ENCODE measurements at regions of chr14 and their contacts with region 1.

Region 1: GRCh38 chr14:73718418-73719251 is 4.5 kb upstream of the PNMA1 start:
- DNase-seq: no peak
- ATAC-seq: no peak
- H3K4me3 ChIP-seq: no peak overlapping the region
- H3K27ac ChIP-seq: peak overlapping the region; percentile 38
- H3K4me1 ChIP-seq: peaks cover 20% of the 10 kb centered on the region
- H3K27me3 ChIP-seq: no peaks in the 10 kb centered on the region
- CTCF ChIP-seq: no peak
- POLR2A ChIP-seq: no peak
- RAD21 ChIP-seq: no peak

Region 2: GRCh38 chr14:73599499-73599898 is 119.1 kb before region 1 on chr14:
- CTCF ChIA-PET with region 1: no interaction called
- POLR2A ChIA-PET with region 1: no interaction called
- dilution Hi-C with region 1: no loop called
- in situ Hi-C with region 1: no loop called
- intact Hi-C with region 1: no loop called
- DNase-seq: no peak
- ATAC-seq: no peak
- H3K4me3 ChIP-seq: no peak overlapping the region
- H3K27ac ChIP-seq: no peak overlapping the region
- H3K4me1 ChIP-seq: no peaks in the 10 kb centered on the region
- H3K27me3 ChIP-seq: peaks cover 5% of the 10 kb centered on the region
- CTCF ChIP-seq: no peak
- POLR2A ChIP-seq: no peak
- RAD21 ChIP-seq: no peak

Region 3: DNA sequence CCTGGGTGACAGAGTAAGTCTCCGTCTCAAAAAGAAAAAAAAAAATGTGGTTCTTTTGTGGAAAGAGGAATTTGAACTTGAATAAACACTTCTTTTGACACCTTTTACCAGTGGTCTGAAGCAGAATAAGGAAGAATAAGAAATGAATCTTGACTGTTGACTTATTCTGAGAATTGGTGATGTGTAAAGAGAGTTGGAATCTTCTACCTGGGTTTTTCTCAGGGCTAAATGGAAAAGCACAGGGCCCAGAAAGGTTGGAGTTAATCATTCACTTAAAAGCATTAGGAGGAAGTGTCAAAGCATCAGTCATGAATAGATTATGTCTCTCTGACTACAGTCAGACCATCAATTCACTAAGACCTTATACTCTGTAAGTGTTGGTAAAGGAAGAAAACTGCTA is 18.3 kb before region 1 on chr14:
- CTCF ChIA-PET with region 1: no interaction called
- POLR2A ChIA-PET with region 1: interaction called, 19 read pairs
- dilution Hi-C with region 1: no loop called
- in situ Hi-C with region 1: no loop called
- intact Hi-C with region 1: no loop called
- DNase-seq: no peak
- ATAC-seq: no peak
- H3K4me3 ChIP-seq: no peak overlapping the region
- H3K27ac ChIP-seq: no peak overlapping the region
- H3K4me1 ChIP-seq: peaks cover 4% of the 10 kb centered on the region
- H3K27me3 ChIP-seq: no peaks in the 10 kb centered on the region
- CTCF ChIP-seq: no peak
- POLR2A ChIP-seq: no peak
- RAD21 ChIP-seq: no peak

Region 4: DNA sequence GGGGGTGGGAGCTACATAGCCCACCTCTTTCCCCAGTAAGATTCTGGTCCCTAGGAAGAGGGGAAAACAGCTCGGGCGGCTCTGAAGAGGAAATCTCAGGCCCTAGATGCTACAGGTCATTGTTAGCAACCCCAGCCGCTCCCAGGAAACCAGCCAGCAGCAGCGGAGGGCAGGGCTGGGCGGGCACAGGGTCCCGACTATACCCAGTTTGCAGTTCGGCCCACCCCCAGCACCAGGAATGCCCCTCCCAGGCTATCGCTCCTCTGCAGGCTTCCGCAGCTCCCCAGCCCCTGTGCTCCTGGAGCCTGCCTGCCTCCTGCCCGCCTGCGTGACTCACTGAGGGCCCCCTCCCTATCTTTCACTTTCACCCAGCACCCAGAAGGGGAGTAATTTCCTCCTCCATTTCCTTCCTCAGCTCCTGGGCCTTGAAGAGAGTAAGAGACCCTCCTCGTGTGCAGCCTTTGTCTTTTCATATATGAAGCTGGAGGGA is 22.8 kb after region 1 on chr14:
- CTCF ChIA-PET with region 1: no interaction called
- POLR2A ChIA-PET with region 1: no interaction called
- dilution Hi-C with region 1: no loop called
- in situ Hi-C with region 1: no loop called
- intact Hi-C with region 1: no loop called
- DNase-seq: peak; percentile 66
- ATAC-seq: peak; percentile 74
- H3K4me3 ChIP-seq: peak overlapping the region; percentile 13; the same call in 1 of the 2 replicates
- H3K27ac ChIP-seq: peak overlapping the region; percentile 87
- H3K4me1 ChIP-seq: peaks cover 58% of the 10 kb centered on the region
- H3K27me3 ChIP-seq: no peaks in the 10 kb centered on the region
- CTCF ChIP-seq: 0 out of 2 replicates have a peak, but pooled peaks have one; percentile 9
- POLR2A ChIP-seq: no peak
- RAD21 ChIP-seq: no peak; the same call in 1 of the 2 replicates

Region 5: DNA sequence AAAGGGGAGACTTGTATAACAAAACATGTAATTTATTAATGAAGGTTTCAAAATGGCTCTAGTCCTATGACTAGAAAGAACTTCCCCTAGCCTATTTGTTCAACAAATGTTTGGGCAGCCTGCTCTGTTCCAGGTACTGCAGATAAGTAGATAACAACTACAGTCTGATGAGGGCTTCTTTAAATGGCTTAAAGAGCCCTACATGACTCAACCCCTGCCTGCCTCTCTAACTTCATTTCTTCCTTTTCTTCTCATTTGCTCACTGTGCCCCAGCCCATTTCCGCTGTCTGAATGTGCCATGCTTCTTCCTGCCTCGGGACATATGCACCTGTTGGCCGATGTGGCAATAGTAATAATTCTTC is 344.2 kb after region 1 on chr14:
- CTCF ChIA-PET with region 1: no interaction called
- POLR2A ChIA-PET with region 1: no interaction called
- dilution Hi-C with region 1: no loop called
- in situ Hi-C with region 1: no loop called
- intact Hi-C with region 1: no loop called
- DNase-seq: peak; percentile 15
- ATAC-seq: peak; percentile 24
- H3K4me3 ChIP-seq: no peak overlapping the region
- H3K27ac ChIP-seq: no peak overlapping the region
- H3K4me1 ChIP-seq: peaks cover 19% of the 10 kb centered on the region
- H3K27me3 ChIP-seq: no peaks in the 10 kb centered on the region
- CTCF ChIP-seq: no peak
- POLR2A ChIP-seq: no peak
- RAD21 ChIP-seq: no peak

Region 6: DNA sequence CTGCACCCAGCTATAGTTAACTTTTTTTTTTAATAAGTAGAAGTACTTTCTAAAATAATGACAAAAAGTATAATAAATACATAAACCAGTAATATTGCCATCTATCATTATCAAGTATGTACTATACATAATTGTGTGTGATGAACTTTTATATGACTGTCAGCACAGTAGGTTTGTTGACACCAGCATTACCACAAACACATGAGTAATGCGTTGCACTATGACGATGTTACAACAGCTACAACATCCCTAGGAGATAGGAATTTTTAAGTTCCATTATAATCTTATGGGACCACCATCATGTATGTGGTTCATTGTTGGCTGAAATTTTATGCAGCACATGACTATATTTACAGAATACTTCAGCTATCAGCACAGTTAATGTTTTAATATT is 457.8 kb after region 1 on chr14:
- CTCF ChIA-PET with region 1: no interaction called
- POLR2A ChIA-PET with region 1: no interaction called
- dilution Hi-C with region 1: no loop called
- in situ Hi-C with region 1: no loop called
- intact Hi-C with region 1: no loop called
- DNase-seq: no peak
- ATAC-seq: no peak
- H3K4me3 ChIP-seq: no peak overlapping the region
- H3K27ac ChIP-seq: no peak overlapping the region
- H3K4me1 ChIP-seq: no peaks in the 10 kb centered on the region
- H3K27me3 ChIP-seq: no peaks in the 10 kb centered on the region
- CTCF ChIP-seq: no peak
- POLR2A ChIP-seq: no peak
- RAD21 ChIP-seq: no peak